A549 (cell line): ENCODE measurements at regions of chr16 and their contacts with region 1.

Region 1: DNA sequence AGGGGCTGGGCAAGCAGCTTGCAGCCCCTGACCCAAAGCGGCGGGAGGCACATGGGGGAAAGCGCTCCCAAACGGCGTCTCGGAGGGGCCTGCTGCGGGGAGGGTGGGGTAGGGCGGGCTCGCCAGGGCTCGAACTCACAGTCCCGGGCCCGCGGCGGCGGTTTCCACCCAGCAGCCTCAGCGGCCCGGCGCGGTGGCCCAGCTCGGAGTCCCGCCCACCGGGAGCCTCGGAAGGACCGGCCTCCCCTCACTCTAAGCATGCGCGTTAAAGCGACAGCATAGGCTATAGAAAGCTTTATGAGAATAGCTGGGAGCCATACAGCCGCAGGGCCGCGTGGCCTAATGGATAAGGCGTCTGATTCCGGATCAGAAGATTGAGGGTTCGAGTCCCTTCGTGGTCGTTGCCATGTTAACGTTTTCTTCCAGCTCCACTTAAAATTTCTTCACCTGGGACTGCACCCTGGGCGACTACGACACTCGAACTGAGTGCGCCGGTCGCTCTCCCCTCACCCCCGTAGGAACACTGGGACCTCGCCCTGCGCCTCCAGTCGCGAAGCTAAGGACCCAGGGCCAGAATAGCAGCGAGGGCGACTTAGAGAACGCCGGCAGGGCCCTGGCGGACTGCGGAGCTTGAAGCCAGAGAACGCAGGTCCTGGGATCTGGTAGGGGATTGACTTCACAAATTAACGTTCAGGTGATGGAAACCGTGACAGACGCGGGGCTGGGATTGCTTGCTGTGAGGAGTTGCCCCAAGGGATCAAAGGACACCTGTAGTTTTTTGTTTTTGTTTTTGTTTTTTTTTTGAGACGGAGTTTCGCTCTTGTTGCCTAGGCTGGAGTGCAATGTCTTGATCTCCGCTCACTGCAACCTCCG is 15.8 kb downstream of the ZNF213 start:
- DNase-seq: peak; percentile 86 to 97
- ATAC-seq: peak; percentile 69 to 83
- H3K4me3 ChIP-seq: peak overlapping the region; percentile 76
- H3K27ac ChIP-seq: peak overlapping the region; percentile 95 to 97
- H3K4me1 ChIP-seq: peaks cover 7% of the 10 kb centered on the region
- CTCF ChIP-seq: no peak
- EP300 ChIP-seq: no peak
- POLR2A ChIP-seq: no peak
- RAD21 ChIP-seq: no peak

Region 2: GRCh38 chr16:3134564-3135417 is 15.8 kb before region 1 on chr16 and contains the start of gene ZNF213:
- CTCF ChIA-PET with region 1: interaction called, 158 read pairs
- POLR2A ChIA-PET with region 1: interaction called, 64 read pairs
- DNase-seq: peak; percentile 94 to 98
- ATAC-seq: peak; percentile 95 to 96
- H3K4me3 ChIP-seq: peak within 1 kb of the TSS; percentile 98
- H3K27ac ChIP-seq: peak within 1 kb of the TSS; percentile 90 to 98
- H3K4me1 ChIP-seq: peaks cover 14% of the 10 kb centered on the region; the same call in 1 of the 3 replicates
- CTCF ChIP-seq: no peak
- EP300 ChIP-seq: no peak
- POLR2A ChIP-seq: peak; percentile 70
- RAD21 ChIP-seq: no peak
- polyA plus RNA-seq, gene ZNF213: 0.72 and 1.8 TPM in 2 replicates

Region 3: GRCh38 chr16:3165111-3165822 is 14.7 kb after region 1 on chr16:
- CTCF ChIA-PET with region 1: interaction called, 39 read pairs
- POLR2A ChIA-PET with region 1: interaction called, 43 read pairs
- DNase-seq: no peak
- ATAC-seq: no peak
- H3K4me3 ChIP-seq: peak overlapping the region; percentile 26; the same call in 1 of the 3 replicates
- H3K27ac ChIP-seq: peak overlapping the region; percentile 76 to 81
- H3K4me1 ChIP-seq: peaks cover 3% of the 10 kb centered on the region; the same call in 2 of the 3 replicates
- CTCF ChIP-seq: no peak
- EP300 ChIP-seq: no peak
- POLR2A ChIP-seq: no peak
- RAD21 ChIP-seq: no peak

Region 4: DNA sequence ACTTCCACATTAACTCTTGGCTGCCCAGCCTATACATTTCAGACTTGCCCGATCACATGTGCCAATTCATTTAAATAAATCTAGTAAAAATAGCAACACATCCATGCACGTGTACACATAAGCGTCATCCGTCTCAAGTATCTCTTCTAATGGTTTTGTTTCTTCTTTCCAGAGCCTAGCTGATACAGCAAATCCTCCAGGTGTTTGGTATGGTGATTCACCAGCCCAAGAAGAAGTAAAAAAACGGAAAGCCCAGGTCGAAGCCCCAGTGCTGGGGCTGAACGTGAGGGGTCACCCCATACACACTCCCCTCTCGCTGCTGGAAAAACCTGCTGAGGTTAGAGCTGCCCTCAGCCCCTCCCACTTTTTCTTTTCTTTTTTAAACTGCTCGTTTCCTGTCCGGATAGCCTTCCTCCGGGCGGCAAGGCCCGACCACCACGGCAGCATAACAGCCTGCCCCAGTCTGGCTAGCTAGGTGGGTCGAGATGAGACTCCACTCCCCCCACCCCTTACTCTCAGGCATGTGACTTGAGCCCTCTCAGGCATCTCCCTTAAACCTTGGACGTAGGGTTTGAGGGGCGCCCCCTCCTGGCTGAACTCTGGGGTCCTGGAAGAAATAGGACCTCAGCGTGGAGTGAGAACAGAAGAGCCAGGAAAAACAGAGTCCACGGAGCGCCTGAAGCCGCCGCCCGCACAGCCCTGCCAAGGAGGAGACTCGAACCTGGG is 23.5 kb after region 1 on chr16:
- CTCF ChIA-PET with region 1: interaction called, 20 read pairs
- POLR2A ChIA-PET with region 1: interaction called, 10 read pairs
- DNase-seq: peak; percentile 76 to 85
- ATAC-seq: peak; percentile 32 to 36
- H3K4me3 ChIP-seq: peak overlapping the region; percentile 51
- H3K27ac ChIP-seq: peak overlapping the region; percentile 37 to 79; a peak in 5 of 6 replicates
- H3K4me1 ChIP-seq: peaks cover 20% of the 10 kb centered on the region; the same call in 2 of the 3 replicates
- CTCF ChIP-seq: peak; percentile 61
- EP300 ChIP-seq: no peak
- POLR2A ChIP-seq: no peak
- RAD21 ChIP-seq: peak in 1 of 2 experiments; percentile 22; a peak in 2 of 5 replicates

Region 5: DNA sequence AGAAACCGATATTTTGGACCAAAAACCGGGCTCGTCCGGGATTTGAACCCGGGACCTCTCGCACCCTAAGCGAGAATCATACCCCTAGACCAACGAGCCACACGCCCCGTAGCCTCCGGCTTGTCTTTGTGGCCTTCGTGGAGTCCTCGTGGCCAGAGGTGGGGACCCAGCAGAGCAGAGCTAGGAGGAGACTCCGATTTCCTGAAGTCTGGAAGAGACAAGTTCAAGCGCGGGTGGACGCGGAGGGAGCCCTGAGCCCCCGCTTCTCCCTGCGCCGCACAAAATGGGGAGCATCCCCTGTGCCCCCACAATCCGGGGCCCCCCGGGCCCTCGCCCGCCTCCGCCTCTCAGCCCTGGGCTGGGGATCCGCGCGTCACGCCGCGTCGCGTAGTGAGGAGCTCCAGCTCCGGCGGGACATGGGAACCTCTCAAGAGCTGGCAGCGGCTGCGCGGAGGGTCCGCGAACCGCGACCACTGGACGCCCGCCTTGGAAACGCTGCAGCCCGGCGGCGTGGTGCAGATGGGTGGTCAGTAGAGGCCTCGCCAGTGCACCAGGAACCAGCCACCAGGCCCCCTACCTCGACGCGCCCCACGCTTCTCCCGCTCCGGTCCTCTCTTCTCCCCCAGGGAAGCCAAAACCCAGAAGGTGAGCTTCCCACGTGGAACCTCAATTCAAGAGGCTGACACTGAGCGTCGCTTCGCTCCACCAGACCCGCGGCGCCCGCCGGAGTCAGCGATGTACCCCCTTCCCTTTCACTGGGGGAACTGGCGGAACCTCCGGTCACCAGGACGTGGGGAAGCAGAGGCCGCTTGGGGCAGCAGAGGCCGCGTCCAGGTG is 32.2 kb after region 1 on chr16:
- CTCF ChIA-PET with region 1: interaction called, 10 read pairs
- POLR2A ChIA-PET with region 1: interaction called, 3 read pairs
- DNase-seq: peak; percentile 67 to 88
- ATAC-seq: peak; percentile 69 to 73
- H3K4me3 ChIP-seq: peak overlapping the region; percentile 66
- H3K27ac ChIP-seq: peak overlapping the region; percentile 65 to 80
- H3K4me1 ChIP-seq: peaks cover 4% of the 10 kb centered on the region; the same call in 1 of the 3 replicates
- CTCF ChIP-seq: no peak; the same call in 2 of the 3 replicates
- EP300 ChIP-seq: no peak
- POLR2A ChIP-seq: no peak
- RAD21 ChIP-seq: peak; percentile 23 to 43; a peak in 4 of 5 replicates